ENCODE measurements at regions of chr14 and their contacts with region 1.

Region 1: DNA sequence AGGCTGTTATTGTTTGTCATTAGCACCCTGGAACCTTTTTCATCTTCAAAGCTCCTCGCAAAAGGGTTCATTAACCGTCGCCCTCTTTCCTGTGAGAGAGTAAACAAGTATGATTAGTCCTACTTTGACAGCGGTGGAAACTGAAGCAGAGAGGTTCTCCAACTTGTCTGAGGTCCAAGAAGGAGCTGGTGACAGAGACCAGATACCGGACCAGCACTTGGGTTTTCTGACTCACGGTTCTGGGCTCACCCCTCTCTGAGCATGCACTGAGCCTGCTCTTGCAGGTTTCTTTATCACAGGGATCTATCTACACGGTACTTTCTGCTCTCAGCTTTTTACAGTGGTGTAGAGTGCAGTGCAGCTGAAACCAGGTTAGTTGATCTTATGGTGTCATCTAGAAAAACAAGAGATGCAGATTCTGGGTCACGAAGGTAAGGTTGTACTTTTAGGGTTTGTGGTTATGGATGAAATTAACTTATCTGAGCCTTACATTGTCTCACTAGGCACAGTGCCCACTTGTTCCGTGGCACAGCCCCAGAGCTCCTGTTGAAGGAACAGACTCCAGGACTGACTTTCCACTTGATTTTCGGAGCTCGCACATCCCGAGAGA is 62.1 kb downstream of the PPP2R5C start:
- DNase-seq: peak; percentile 75
- H3K4me3 Mint-ChIP-seq: peak overlapping the region; percentile 75
- H3K27ac Mint-ChIP-seq: peak overlapping the region; percentile 97
- H3K4me1 Mint-ChIP-seq: peaks cover 80% of the 10 kb centered on the region
- H3K27me3 Mint-ChIP-seq: no peaks in the 10 kb centered on the region

Region 2: DNA sequence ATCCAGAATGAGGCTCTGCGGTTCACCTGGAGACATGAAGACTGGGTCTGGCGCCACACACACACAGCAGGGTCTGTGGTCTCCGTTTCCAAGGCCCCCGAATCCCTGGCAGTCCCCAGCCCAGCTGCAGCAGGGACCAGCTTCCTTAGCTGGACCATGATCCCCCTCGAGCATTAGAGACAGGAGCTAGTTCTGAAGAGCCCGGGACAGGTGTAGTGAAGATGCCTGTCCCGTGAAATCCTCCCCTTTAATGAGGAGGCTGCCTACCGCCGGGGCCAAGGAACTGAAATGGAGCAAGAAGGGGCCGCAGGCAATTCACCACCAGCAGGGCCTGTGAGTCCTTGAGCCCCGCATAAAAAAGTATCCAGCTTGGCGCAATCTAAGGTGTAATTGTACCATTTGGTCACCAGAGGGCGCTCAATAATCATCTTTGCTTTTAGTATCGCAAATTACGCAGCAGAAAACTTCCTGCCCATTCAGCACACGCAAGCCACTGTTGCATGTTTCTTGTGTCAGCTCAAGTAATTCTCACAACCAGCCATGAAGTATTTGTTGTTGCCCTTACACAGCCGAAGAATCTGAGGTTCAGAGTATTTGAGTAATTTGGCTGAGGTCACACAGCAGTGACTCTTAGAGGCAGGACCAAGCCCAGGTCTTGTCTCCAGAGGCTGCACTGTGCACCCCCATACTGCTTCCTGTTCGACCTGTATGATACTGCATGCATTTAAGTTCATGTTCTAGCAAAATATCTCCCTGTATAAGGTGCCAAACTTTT is 116.4 kb before region 1 on chr14:
- intact Hi-C with region 1: loop called (anchors 5 kb)
- DNase-seq: peak; percentile 55
- H3K4me3 Mint-ChIP-seq: no peak overlapping the region
- H3K27ac Mint-ChIP-seq: peak overlapping the region; percentile 18
- H3K4me1 Mint-ChIP-seq: peaks cover 22% of the 10 kb centered on the region
- H3K27me3 Mint-ChIP-seq: peaks cover 21% of the 10 kb centered on the region

Region 3: GRCh38 chr14:101731187-101732080 is 92.2 kb before region 1 on chr14:
- intact Hi-C with region 1: loop called (anchors 1 kb)
- DNase-seq: peak; percentile 76
- H3K4me3 Mint-ChIP-seq: peak overlapping the region; percentile 70
- H3K27ac Mint-ChIP-seq: peak overlapping the region; percentile 93
- H3K4me1 Mint-ChIP-seq: peaks cover 56% of the 10 kb centered on the region
- H3K27me3 Mint-ChIP-seq: no peaks in the 10 kb centered on the region

Region 4: DNA sequence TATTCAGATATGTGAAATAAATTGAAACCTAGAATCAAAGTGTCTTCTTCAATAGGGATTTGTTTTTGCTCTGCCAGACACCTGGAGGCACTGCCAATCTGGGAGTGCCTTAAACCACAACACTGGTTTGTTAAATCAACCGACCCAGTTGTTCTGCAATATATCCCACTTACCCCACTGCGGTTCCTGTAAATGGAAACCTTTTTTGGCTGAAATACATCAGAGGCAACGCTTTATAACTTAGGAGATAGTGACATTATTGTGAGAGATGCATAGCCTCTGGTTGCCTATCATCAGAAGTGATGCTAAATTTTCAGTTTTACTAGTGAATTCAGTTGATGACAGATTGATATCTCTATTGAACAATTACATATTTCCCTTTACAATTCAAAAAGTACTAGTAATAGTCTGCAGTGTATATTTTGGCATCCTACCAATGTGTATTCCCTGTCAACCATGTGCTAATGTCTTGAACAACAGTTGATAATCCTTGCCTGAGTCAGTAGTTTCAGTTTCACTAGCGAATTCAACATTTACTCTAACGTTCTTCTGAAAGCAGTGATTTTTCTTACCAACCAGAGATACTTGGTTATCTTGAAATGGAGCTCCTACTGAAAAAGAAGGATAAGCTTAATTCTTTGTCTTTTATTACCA is 31.6 kb before region 1 on chr14:
- intact Hi-C with region 1: loop called (anchors 1 kb)
- DNase-seq: no peak
- H3K4me3 Mint-ChIP-seq: peak overlapping the region; percentile 1
- H3K27ac Mint-ChIP-seq: peak overlapping the region; percentile 28
- H3K4me1 Mint-ChIP-seq: peaks cover 19% of the 10 kb centered on the region
- H3K27me3 Mint-ChIP-seq: no peaks in the 10 kb centered on the region

Region 5: DNA sequence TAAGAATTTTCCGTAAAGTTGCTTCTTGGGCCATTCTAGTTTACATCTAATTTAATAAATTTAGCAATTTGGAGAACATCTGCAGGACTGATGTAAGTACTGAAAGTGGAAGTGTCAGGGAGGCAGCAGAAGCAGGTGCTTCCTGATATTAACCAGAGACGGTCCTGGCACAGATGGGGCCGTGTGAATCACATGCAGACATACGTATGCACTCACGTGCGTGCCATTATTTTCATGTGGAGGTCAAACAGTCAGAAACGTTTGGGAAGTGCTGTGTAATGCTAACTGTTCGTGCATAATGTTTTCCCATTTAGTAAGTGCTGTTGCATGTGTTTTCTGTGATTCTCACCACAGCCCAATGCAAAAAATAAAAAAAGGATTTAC is 52.9 kb after region 1 on chr14:
- intact Hi-C with region 1: loop called (anchors 1 kb)
- DNase-seq: peak; percentile 62
- H3K4me3 Mint-ChIP-seq: peak overlapping the region; percentile 54
- H3K27ac Mint-ChIP-seq: peak overlapping the region; percentile 70
- H3K4me1 Mint-ChIP-seq: peaks cover 73% of the 10 kb centered on the region
- H3K27me3 Mint-ChIP-seq: no peaks in the 10 kb centered on the region

Region 6: DNA sequence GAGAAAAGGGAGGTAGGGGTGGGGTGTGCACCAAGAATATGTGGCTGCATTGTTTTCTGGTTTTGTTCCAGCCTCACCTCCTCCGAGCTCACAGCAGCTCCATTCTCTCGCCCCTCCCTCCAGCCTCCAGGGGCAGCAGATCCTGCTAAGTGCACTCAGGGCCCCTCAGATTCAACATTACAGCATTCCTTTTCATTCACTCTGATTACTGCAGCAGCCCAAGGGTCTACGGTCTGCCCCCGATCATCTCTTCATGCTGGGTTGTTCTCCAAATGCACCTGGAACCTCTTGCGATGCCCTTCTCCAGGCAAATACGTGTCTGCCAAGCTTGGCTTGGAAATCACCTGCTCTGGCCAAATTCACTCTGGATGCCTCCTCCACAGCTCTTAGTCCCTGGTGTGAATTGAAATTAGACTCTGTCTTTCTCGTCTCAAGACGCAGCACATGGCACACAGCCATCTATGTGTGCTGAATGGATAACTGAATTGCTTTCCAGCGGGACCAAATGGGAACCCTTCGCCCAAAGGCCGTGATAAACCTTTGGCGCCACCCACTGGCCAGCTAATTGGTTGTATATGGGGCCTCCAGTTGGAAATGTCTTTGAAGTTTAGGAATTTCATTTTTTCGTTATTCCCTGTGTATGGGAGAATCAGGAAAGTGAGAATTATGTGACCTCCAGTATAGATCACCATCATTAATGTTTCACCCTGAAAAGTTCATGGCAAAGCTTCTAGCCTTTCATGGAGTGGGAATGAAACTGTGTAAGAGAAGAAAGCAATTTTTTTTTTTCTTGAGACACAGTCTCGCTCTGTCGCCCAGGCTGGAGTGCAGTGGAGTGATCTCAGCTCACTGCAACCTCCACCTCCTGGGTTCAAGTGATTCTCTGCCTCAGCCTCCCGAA is 272.8 kb after region 1 on chr14:
- intact Hi-C with region 1: no loop called
- DNase-seq: peak; percentile 35
- H3K4me3 Mint-ChIP-seq: no peak overlapping the region
- H3K27ac Mint-ChIP-seq: no peak overlapping the region
- H3K4me1 Mint-ChIP-seq: peaks cover 13% of the 10 kb centered on the region
- H3K27me3 Mint-ChIP-seq: no peaks in the 10 kb centered on the region